ENCODE measurements at regions of chr18 and their contacts with region 1.

Region 1: DNA sequence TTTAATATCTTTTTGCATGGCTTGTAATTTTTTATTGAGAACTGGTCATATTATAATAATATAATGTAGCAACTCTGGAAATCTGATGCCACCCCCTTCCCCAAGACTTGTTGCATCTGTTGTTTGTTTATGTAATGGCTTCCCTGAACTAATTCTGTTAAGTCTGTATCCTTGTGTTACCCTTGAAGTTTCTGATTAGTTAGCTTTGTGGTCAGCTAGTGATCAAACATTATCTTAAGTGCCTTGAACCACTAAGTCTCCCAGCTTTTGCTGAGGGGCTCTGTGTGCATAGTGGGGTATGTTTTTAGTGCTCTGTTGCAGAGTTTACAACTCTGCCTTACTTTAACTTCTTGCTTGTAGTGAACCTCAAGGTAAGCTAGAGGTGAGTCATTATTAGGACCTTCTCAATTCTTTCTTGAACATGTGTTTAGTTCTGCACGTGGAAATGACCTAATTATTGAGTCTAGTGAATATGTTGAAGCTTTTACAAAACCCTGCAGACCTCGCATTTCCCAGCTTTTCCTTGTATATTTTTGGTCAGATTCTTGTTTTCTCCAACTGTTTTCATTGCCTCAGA is 24.8 kb downstream of the SMCHD1 start:
- DNase-seq: no peak
- CTCF ChIP-seq: no peak

Region 2: GRCh38 chr18:2692508-2692907 is 12.2 kb after region 1 on chr18:
- CTCF ChIA-PET with region 1: interaction called, 10 read pairs
- POLR2A ChIA-PET with region 1: no interaction called
- DNase-seq: no peak
- CTCF ChIP-seq: no peak